Left cardiac atrium (tissue), 4 donors: ENCODE measurements at regions of chr2 and their contacts with region 1.

Region 1: DNA sequence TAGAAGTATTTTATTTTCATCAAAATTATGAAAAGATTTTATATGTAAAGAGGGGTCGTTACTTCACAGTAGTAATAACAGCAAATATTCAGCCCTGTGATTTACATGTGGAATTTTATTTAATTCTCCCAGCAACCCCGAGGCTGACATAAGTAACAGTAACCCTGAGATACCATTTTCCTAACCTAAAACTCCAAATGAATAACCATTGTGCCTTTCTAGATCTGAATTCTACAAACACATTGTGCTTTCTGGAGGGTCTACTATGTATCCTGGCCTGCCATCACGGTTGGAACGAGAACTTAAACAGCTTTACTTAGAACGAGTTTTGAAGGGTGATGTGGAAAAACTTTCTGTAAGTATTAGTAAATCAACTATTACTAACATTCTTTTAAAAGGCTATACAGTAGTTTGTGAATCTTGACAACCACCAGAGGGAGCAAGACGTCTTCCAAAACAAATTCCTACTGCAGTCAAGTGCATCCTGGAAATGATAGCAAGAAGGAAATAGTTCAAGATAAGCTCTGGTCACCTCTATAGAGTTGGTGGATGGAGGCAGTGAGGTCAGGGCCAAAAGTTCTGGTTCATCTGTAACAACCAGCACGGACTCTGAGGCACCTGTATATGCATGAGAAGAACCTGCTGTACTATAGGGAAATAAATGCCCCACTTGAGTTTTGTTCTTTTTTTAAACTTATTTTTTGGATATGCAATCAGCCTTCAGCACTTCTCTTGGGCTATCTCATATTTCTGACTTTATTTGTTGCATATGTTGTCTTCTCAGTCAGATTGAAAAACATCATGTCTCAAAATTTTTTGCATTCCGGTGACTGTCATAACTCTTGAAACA is 37.4 kb downstream of the ACTR2 start:
- DNase-seq: no peak
- ATAC-seq: peak; percentile 72 to 85

Region 2: GRCh38 chr2:65436169-65436823 is 171.2 kb after region 1 on chr2:
- intact Hi-C with region 1: loop called in 1 of 2 experiments (anchors 5 kb)
- DNase-seq: peak; percentile 95
- ATAC-seq: peak; percentile 72 to 79

Region 3: DNA sequence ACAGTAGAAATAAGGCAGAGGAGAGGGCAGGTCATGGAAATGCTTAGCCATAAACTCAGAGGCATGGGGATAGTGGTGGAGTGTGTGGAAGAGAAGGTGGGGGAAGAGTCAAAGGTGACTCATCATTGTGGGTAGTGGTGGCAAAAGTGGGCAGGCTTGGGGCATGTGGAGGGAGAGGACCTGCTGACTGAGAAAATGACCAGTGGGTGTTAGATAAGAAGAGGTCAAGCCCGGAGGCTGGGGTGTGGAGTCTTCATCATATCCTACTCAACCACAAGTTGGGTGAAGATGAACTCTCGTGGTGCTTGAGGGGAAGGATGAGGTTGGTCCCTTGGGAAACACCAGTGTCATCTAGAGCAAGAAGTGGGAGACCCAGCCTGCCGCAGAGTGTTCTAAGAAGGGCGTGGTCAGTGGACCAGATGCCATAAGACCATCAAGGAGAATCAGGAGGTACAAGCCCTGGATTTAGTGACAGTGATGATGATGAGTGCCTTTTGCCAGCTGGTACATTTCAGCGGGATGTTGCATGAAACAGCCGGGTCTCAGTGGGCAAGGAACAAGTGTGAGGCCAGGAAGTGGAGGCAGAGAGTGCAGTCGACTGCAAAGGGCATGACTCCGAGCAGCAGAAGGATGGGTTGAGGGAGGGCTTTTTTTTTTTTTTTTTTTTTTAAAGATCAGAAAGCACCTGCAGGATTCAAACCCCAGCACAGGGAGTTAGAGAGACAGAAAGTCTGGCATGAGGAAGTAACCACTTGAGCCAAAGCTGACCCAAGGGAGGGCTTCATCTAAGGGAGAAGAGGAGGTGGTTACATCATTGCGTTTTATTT is 289.9 kb after region 1 on chr2:
- intact Hi-C with region 1: loop called (anchors 1 to 5 kb)
- DNase-seq: no peak
- ATAC-seq: peak in 1 of 2 donors; percentile 31

Region 4: DNA sequence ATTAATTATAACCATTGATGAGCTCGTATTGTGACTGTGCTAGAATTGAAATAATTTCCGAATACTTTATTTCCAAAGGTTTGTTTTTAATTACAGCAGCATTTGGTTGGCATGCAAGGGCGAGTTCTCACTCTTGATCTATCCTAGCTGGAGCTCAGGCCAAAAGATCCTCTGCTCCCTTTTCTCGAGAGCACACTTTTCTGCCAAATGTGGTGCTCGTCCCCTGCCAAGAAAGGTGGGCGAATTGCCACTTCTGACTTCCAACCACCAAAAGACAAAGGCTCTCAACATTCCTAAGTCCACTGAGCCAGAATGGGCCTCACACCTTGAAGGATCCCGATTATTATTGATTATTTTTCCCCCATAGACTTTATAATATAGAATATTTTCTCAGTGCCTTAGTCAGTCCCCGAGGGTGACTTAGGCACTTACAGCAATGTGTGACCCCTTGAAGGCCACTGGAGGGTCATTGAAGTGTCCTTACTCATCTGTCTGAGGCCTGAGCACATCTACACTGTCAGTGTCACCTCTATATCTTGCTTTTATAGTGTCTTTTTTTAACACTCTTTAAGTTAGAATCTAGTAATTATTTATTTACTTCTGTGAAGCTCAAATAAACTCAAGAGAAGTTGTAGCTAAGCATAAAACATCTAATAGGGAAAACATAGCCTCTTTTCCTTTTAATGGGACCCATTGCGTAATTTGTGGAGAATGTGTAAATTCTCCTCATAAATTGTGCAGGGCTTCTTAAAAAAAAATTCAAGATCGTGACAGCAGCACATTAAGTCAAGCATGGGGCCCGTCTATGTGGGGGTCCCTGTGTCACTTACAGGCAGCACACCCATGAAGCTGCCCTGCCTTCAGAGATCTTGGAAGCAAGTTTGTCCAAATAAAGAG is 1268.2 kb after region 1 on chr2:
- intact Hi-C with region 1: no loop called
- DNase-seq: no peak
- ATAC-seq: peak; percentile 60 to 81